BJ (cell line): ENCODE measurements at regions of chr10 and their contacts with region 1.

Region 1: GRCh38 chr10:21292763-21293517 is 232.5 kb downstream of the SKIDA1 start:
- DNase-seq: peak; percentile 97
- H3K4me3 ChIP-seq: peak overlapping the region; percentile 16
- H3K27me3 ChIP-seq: no peaks in the 10 kb centered on the region
- CTCF ChIP-seq: no peak

Region 2: GRCh38 chr10:21417172-21417712 is 124.3 kb after region 1 on chr10:
- CTCF ChIA-PET with region 1: no interaction called
- POLR2A ChIA-PET with region 1: interaction called, 10 read pairs
- DNase-seq: no peak
- H3K4me3 ChIP-seq: no peak overlapping the region
- H3K27me3 ChIP-seq: no peaks in the 10 kb centered on the region
- CTCF ChIP-seq: no peak

Region 3: DNA sequence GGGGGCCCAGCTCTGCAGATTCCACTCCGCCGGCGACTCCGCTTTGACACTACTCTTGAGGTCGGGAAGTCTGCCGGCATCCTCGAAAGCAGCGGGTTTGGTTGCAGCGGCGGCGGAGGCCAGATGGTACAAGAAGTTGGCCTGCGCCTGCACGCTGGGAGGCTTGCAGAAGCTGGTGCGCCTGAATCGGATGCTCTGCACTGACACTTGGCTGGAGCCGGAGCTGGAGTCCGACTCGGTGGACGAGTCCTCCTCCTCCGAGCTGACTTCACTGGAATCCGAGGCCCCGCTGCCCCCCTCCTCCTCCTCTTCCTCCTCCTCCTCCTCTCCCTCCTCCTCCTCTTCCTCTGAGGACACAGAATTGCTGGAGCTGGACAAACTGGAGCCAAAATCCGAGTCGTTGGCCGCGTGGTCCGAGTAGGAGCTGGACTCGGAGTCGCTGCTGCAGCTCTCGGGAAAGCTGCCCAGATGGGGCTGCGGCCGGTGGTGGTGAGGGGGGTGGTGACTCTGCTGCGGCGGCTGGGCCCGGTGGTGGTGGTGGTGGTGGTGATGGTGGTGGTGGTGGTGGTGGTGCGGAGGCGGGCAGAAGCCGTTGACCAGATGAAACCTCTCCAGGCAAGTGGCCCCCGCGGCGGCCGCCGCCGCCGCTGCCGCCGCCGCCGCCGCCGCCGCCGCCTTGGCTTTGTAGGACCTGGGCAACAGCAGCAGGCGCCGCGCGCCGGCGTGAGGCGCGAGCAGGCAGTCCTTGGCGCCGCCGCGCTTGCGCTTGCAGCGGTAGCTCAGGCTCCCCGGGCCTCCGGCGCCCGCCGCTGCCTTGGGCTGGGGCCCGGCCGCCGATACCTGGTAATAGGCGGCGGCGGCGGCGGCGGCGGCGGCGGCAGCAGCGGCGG is 223.5 kb after region 1 on chr10:
- CTCF ChIA-PET with region 1: no interaction called
- POLR2A ChIA-PET with region 1: interaction called, 10 read pairs
- DNase-seq: no peak
- H3K4me3 ChIP-seq: peak overlapping the region; percentile 59
- H3K27me3 ChIP-seq: no peaks in the 10 kb centered on the region
- CTCF ChIP-seq: no peak